Activated CD4-positive, alpha-beta memory T cell treated with anti-CD3 and anti-CD28 coated beads for 36 hours (primary cell): ENCODE measurements at regions of chr6 and their contacts with region 1.

Region 1: DNA sequence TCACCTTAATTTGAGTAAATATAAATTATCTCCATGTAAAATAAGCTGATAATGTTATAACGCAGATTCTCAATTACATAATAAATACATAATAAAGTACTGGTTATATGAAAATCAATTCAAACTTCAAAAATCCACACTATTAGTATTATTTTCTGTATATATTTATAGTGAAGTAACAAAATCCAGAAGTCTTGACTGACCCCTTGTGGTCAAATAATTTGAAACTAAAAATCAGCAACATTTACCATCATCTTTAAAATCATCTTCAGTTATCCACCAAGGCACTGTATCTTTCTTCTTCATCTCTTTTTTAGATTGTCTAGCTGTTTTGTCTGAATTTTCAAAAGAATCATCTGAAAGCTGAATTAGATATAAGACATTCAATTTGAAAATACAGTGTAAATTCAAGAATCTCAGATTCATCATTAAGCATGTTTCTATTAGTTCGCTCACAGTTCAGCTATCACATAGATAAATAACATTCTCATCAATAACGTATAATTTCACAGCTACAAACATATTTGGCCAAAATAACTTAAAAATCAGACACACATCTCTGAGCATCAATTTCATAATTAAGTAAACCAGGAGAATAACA is 6.5 kb downstream of the CEP162 start:
- DNase-seq: no peak
- H3K4me3 Mint-ChIP-seq: no peak overlapping the region
- H3K27ac Mint-ChIP-seq: no peak overlapping the region
- H3K4me1 Mint-ChIP-seq: peaks cover 7% of the 10 kb centered on the region
- H3K27me3 Mint-ChIP-seq: no peaks in the 10 kb centered on the region

Region 2: DNA sequence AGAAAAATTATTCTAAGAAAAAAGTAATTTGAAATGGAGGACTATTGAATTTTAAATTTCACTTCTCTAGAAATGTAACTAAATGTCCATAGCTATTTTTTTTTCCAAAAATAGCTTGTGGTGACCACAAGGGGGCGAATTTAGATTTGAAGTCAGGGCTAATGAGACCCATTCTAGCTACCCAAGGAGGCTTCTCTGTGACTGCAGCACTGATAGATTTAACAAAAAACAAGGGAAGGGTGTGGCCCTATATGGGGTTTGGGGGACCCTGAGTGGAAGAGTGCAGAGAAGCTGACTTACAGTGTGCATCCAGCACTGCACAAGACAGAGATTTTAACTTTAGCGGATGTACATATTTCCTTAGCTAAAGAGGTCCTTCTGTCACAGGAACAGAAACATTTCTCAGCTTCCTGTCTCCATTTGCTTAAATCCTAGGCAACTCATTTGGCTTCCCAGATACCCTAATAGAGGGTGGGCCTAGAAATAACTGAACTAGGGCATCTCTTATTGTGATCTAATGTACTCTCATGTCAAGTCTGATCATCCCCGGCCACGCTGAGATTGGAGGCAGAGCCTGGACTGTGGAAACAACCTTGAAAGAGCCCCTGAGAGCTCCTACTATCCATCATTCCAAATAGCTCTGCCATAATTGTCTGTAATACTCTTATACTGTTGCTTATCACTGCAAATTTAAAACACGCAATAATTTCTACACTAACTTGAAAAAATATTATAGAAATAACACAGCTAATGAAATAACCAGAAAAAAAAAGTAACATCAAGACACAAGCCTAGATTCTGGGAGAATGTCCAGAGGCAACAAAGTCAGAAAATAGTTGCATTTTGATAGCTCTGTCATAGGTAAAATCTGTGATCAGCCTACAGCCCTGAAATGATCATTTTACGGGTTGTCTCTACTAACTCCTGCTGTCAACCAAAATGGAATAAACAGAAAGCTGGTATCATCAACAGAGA is 605.6 kb before region 1 on chr6:
- CTCF ChIA-PET with region 1: interaction called, 3 read pairs
- POLR2A ChIA-PET with region 1: no interaction called
- intact Hi-C with region 1: loop called (anchors 5 kb)
- DNase-seq: no peak
- H3K4me3 Mint-ChIP-seq: no peak overlapping the region
- H3K27ac Mint-ChIP-seq: no peak overlapping the region
- H3K4me1 Mint-ChIP-seq: no peaks in the 10 kb centered on the region
- H3K27me3 Mint-ChIP-seq: no peaks in the 10 kb centered on the region

Region 3: GRCh38 chr6:83884523-83884922 is 336.4 kb before region 1 on chr6:
- CTCF ChIA-PET with region 1: interaction called, 4 read pairs
- POLR2A ChIA-PET with region 1: no interaction called
- intact Hi-C with region 1: loop called (anchors 1 kb)
- DNase-seq: no peak
- H3K4me3 Mint-ChIP-seq: no peak overlapping the region
- H3K27ac Mint-ChIP-seq: no peak overlapping the region
- H3K4me1 Mint-ChIP-seq: peaks cover 14% of the 10 kb centered on the region
- H3K27me3 Mint-ChIP-seq: no peaks in the 10 kb centered on the region

Region 4: GRCh38 chr6:84469144-84469543 is 248.2 kb after region 1 on chr6:
- CTCF ChIA-PET with region 1: no interaction called
- POLR2A ChIA-PET with region 1: no interaction called
- intact Hi-C with region 1: no loop called
- DNase-seq: no peak
- H3K4me3 Mint-ChIP-seq: no peak overlapping the region
- H3K27ac Mint-ChIP-seq: no peak overlapping the region
- H3K4me1 Mint-ChIP-seq: no peaks in the 10 kb centered on the region
- H3K27me3 Mint-ChIP-seq: no peaks in the 10 kb centered on the region